Gastrocnemius medialis (tissue), 4 donors: ENCODE measurements at regions of chr10 and their contacts with region 1.

Region 1: DNA sequence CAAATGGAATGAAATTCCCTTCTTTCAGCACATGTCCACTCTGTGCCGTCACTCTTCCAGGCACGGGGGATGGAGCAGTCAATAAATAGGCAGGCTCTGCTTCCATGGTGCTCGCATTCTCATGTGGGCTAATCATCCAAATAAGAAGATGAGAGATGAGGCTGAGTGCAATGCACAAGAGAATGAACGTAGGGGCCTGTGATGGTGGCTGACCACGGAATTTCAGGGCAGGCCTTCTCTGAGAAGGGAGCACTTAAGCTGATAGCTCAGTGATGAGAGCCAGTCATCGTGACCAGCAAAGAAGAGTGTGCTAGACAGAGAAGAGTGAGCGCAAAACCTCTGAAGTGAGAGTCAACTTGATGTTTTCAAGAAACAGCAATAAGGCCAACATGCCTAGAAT is 47.9 kb downstream of the TAF3 start:
- DNase-seq: no peak
- ATAC-seq: no peak
- H3K4me3 ChIP-seq: no peak overlapping the region
- H3K27ac ChIP-seq: no peak overlapping the region
- H3K4me1 ChIP-seq: no peaks in the 10 kb centered on the region
- H3K27me3 ChIP-seq: no peaks in the 10 kb centered on the region
- CTCF ChIP-seq: no peak
- POLR2A ChIP-seq: no peak

Region 2: DNA sequence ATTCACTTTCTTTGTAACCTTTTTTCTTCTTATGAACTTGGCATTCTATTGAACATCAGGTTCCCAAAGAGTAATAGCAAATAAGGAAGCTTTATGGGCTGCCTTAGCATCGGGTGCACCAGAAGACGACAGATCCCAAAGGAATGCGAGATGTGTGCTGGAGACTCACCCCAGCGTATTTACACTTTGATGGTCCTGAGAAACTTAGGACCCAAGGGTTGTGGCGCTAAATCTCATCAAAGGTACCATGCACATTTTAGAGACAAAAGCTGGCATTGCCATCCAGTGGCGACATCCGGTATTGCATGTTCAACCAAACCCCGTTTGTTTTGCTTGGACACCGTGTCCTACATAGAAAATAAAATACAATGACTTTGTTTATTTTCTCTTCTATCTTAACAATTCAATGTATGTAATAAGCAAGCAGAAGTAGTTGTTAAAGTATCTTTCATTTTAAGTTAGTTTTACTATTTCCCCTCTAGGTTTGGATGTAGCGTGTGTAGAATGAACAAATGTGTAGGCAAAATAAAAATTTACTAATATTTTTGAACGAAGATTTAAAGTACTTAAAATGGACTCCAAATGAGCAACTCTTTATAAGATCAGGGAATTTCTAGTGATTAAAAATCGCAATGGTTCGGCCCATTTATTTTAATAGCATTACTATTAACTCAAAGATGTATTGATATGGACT is 1343.1 kb after region 1 on chr10:
- in situ Hi-C with region 1: loop called (anchors 5 to 10 kb)
- intact Hi-C with region 1: no loop called
- DNase-seq: peak in 1 of 2 donors; percentile 28
- ATAC-seq: peak in 1 of 2 donors; percentile 53
- H3K4me3 ChIP-seq: no peak overlapping the region
- H3K27ac ChIP-seq: no peak overlapping the region
- H3K4me1 ChIP-seq: no peaks in the 10 kb centered on the region
- H3K27me3 ChIP-seq: no peaks in the 10 kb centered on the region
- CTCF ChIP-seq: peak; percentile 55 to 84 (median 72)
- POLR2A ChIP-seq: no peak